ENCODE measurements at regions of chr14 and their contacts with region 1.

Region 1: GRCh38 chr14:58327019-58327418 is 28.7 kb downstream of the ARID4A start:
- DNase-seq: no peak
- ATAC-seq: no peak
- H3K4me3 ChIP-seq: no peak overlapping the region
- H3K27ac ChIP-seq: no peak overlapping the region
- H3K4me1 ChIP-seq: no peaks in the 10 kb centered on the region
- H3K27me3 ChIP-seq: no peaks in the 10 kb centered on the region
- CTCF ChIP-seq: no peak

Region 2: GRCh38 chr14:58280954-58281787 is 45.8 kb before region 1 on chr14:
- CTCF ChIA-PET with region 1: no interaction called
- POLR2A ChIA-PET with region 1: no interaction called
- in situ Hi-C with region 1: no loop called
- intact Hi-C with region 1: no loop called
- DNase-seq: no peak
- ATAC-seq: no peak
- H3K4me3 ChIP-seq: no peak overlapping the region
- H3K27ac ChIP-seq: no peak overlapping the region
- H3K4me1 ChIP-seq: no peaks in the 10 kb centered on the region
- H3K27me3 ChIP-seq: no peaks in the 10 kb centered on the region
- CTCF ChIP-seq: no peak

Region 3: GRCh38 chr14:58297762-58298476 is 29.1 kb before region 1 on chr14:
- CTCF ChIA-PET with region 1: no interaction called
- POLR2A ChIA-PET with region 1: interaction called, 18 read pairs
- in situ Hi-C with region 1: no loop called
- intact Hi-C with region 1: no loop called
- DNase-seq: peak; percentile 98
- ATAC-seq: peak; percentile 95
- H3K4me3 ChIP-seq: peak overlapping the region; percentile 99
- H3K27ac ChIP-seq: peak overlapping the region; percentile 93
- H3K4me1 ChIP-seq: peaks cover 7% of the 10 kb centered on the region; the same call in 1 of the 2 replicates
- H3K27me3 ChIP-seq: no peaks in the 10 kb centered on the region
- CTCF ChIP-seq: no peak

Measured in Panc1 (cell line).